Activated CD4-positive, alpha-beta T cell treated with anti-CD3 and anti-CD28 coated beads, Interleukin-2, amount 10 ng/mL, durations not matched to agents 7 days and 5 days (primary cell): ENCODE measurements at regions of chr10 and their contacts with region 1.

Region 1: GRCh38 chr10:30404540-30404939 is 29.4 kb upstream of the MAP3K8 start:
- DNase-seq: no peak
- H3K4me3 Mint-ChIP-seq: no peak overlapping the region
- H3K27ac Mint-ChIP-seq: no peak overlapping the region
- H3K4me1 Mint-ChIP-seq: peaks cover 14% of the 10 kb centered on the region
- H3K27me3 Mint-ChIP-seq: peaks cover 8% of the 10 kb centered on the region

Region 2: GRCh38 chr10:30392564-30392990 is 12.0 kb before region 1 on chr10:
- CTCF ChIA-PET with region 1: no interaction called
- POLR2A ChIA-PET with region 1: no interaction called
- DNase-seq: peak; percentile 80
- H3K4me3 Mint-ChIP-seq: no peak overlapping the region
- H3K27ac Mint-ChIP-seq: no peak overlapping the region
- H3K4me1 Mint-ChIP-seq: peaks cover 9% of the 10 kb centered on the region
- H3K27me3 Mint-ChIP-seq: peaks cover 34% of the 10 kb centered on the region

Region 3: GRCh38 chr10:30436191-30436611 is 31.7 kb after region 1 on chr10:
- CTCF ChIA-PET with region 1: no interaction called
- POLR2A ChIA-PET with region 1: no interaction called
- DNase-seq: no peak
- H3K4me3 Mint-ChIP-seq: peak overlapping the region; percentile 90
- H3K27ac Mint-ChIP-seq: peak overlapping the region; percentile 87
- H3K4me1 Mint-ChIP-seq: peaks cover 64% of the 10 kb centered on the region
- H3K27me3 Mint-ChIP-seq: no peaks in the 10 kb centered on the region

Region 4: DNA sequence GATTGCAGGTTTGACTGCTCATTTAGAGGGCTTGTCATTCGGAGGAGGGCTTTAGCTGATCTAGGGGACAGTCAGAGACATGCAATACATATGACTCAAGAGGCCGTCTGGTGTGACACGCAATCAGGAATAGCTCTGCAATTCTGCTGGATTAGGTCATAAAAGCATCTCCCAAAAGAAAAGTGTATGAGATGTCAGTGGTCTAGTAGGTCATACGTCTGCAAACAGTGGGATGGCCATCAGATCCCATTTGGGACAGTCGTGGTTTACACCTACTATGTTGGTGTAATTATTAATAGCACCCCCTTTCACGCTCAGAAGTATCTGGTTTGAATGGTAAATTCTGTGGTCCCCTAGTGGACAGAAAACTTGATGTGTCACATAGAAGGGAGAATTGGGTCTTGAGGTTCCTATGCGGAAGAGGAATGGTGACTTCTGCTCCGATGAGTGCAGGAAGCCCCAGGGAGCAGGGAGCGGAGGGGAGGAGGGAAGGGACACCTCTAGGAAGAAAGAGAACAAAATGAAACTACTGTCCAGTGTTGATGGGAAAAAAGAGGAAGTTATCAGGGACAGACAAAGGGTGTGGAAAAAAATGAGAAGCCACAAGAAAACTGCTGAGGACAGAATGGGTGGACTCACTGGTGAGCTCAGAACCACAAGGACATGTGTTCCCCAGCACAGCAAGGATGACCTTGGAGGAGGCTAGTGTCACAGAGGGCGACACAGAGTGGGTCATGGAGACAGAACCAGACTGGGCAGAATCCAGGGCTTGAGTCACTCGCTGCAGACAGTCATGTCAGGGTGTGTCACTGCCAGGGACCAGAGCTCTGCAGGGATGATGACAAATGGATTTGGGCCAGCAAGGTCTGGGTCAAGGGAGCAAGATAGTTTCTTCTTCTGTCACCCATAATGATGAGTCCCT is 89.3 kb after region 1 on chr10:
- CTCF ChIA-PET with region 1: no interaction called
- POLR2A ChIA-PET with region 1: no interaction called
- DNase-seq: no peak
- H3K4me3 Mint-ChIP-seq: no peak overlapping the region
- H3K27ac Mint-ChIP-seq: peak overlapping the region; percentile 4
- H3K4me1 Mint-ChIP-seq: peaks cover 77% of the 10 kb centered on the region
- H3K27me3 Mint-ChIP-seq: peaks cover 19% of the 10 kb centered on the region

Region 5: GRCh38 chr10:30542001-30542894 is 137.7 kb after region 1 on chr10:
- CTCF ChIA-PET with region 1: no interaction called
- POLR2A ChIA-PET with region 1: interaction called, 12 read pairs
- DNase-seq: no peak
- H3K4me3 Mint-ChIP-seq: no peak overlapping the region
- H3K27ac Mint-ChIP-seq: no peak overlapping the region
- H3K4me1 Mint-ChIP-seq: peaks cover 4% of the 10 kb centered on the region
- H3K27me3 Mint-ChIP-seq: peaks cover 4% of the 10 kb centered on the region